ENCODE measurements at regions of chr14 and their contacts with region 1.

Region 1: GRCh38 chr14:100383727-100384158 is 60.6 kb downstream of the SLC25A47 start:
- DNase-seq: peak; percentile 49 to 72 (median 66)
- H3K4me3 ChIP-seq: no peak overlapping the region
- H3K27ac ChIP-seq: no peak overlapping the region
- H3K4me1 ChIP-seq: peaks cover 0 to 3% (median 0%) of the 10 kb centered on the region in 4 experiments
- H3K27me3 ChIP-seq: no peaks in the 10 kb centered on the region

Region 2: DNA sequence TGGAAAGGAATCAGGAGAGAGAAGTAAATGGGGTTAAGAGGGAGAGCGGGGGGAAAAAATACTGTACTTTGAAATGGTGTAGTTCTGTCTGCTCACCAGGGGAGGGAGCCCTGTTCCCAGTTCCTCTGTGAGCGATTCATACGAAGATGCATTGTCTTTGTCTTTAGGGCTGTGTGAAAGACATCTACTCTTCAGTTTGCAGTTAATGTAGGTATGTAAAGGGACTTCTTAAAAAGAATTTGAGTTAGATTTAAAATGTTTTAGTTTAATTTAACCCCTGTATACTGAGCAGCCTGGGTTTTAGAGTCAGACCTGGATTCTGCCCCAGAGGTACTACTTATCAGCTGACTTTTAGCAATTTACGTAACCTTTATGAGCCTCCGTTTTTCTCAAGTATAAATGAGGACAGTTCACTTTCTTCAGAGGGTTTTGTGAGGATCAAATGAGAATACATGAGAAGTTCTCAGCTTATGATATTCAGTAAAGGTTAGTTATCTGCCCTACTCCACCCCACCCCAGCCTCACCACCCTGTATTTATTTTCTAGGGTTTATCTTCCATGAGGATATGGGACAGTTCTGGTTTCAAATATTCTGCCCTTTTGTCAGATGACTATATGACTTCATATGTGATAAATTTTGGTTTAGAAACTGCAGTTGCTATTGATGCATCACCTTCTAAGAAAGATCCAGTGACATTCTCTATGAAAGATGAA is 401.0 kb before region 1 on chr14:
- CTCF ChIA-PET with region 1: no interaction called
- POLR2A ChIA-PET with region 1: no interaction called
- DNase-seq: peak; percentile 64 to 78 (median 71)
- H3K4me3 ChIP-seq: peak overlapping the region in 1 of 7 experiments; percentile 20
- H3K27ac ChIP-seq: no peak overlapping the region
- H3K4me1 ChIP-seq: peaks cover 0 to 21% (median 14%) of the 10 kb centered on the region in 4 experiments
- H3K27me3 ChIP-seq: no peaks in the 10 kb centered on the region

Region 3: DNA sequence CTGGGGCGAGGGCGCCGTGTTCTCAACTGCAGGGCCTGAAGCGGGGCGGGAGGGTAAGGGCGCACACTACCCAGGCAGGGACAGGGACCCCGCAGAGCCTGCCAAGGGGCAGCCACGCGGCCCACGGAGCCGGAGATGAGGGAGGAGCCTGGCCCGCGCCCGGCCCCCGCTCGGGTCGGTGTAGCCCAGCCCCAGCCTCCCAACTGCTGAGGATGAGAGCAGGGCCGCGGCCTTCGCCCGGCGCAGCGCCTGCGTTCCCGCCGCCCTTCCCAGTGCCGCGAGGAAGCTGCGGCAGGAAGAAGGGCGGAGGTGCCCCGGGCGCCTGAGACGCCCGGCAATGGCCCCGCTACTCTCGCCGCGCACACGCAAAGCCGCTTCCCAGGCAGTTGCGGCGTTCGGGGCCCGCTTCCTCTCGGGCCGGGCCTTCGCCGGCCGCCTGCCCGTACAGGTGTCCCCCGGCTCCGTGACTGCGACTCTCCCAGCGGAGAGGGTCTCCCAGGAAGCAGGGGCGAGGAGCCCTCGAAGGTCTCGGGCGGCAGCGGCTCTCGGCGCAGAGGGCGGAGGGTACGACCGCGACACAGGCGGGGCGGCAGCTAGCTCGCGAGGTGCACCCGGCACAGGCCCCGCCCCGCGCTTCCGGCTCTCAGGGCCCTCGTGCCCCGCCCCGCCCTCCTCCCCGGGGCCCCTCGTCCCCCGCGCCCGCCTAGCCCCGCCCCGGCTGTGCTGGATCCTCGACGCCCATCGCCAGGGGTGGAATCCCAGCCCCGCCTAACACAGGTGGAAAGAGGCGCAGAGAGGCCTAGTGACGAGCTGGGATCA is 169.6 kb before region 1 on chr14:
- CTCF ChIA-PET with region 1: no interaction called
- POLR2A ChIA-PET with region 1: no interaction called
- DNase-seq: peak; percentile 86 to 94 (median 93)
- H3K4me3 ChIP-seq: peak overlapping the region; percentile 57 to 87 (median 76)
- H3K27ac ChIP-seq: peak overlapping the region; percentile 78 to 87
- H3K4me1 ChIP-seq: peaks cover 5 to 25% (median 21%) of the 10 kb centered on the region in 4 experiments
- H3K27me3 ChIP-seq: no peaks in the 10 kb centered on the region

Region 4: GRCh38 chr14:100297302-100298300 is 86.1 kb before region 1 on chr14:
- CTCF ChIA-PET with region 1: interaction called, 14 read pairs
- POLR2A ChIA-PET with region 1: no interaction called
- DNase-seq: peak; percentile 62 to 91 (median 87)
- H3K4me3 ChIP-seq: peak overlapping the region in 3 of 7 experiments; percentile 1 to 26 (median 13)
- H3K27ac ChIP-seq: peak overlapping the region in 1 of 2 experiments; percentile 52
- H3K4me1 ChIP-seq: peaks cover 3 to 30% (median 23%) of the 10 kb centered on the region in 4 experiments
- H3K27me3 ChIP-seq: no peaks in the 10 kb centered on the region

Region 5: DNA sequence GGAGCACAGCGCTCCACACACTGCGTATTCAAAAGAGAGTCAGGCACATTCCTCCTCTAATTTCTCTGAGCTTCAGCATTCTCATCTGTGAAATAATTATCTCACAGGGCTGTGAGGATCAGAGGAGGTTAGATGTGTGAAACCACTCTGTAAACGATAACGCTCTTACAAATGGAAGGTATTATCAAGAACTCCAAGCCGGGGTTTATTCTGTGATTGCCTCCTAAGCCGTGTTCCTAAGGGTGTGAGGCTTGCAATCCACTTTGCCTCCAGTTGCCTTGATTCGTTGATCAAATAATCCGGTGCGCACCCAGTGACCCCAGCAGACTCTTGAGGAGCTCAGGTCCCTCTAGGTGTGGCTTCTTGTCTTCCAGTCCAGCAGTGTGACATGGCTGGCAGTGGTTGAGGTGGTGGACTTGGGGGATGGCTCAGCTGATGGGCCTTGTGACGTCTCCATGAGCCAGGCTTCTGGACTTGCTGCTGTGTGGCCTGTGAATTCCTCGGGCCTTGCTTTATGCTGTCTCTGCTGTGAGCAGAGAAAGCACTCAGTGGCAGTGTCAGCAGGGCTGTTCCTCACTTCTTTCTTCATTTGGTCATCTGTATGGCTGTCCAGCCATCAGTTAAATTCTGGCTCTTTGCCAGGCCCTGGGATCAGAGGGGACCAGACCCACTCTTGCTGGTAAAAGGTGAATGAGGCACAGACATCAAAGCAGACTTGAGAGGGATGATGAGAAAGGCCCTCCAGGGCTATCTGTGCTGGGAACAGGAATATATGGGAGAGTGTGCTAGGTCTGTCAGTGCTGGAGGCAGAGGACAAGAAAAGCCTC is 10.4 kb after region 1 on chr14:
- CTCF ChIA-PET with region 1: interaction called, 19 read pairs
- POLR2A ChIA-PET with region 1: no interaction called
- DNase-seq: no peak
- H3K4me3 ChIP-seq: no peak overlapping the region
- H3K27ac ChIP-seq: no peak overlapping the region
- H3K4me1 ChIP-seq: peaks cover 0 to 7% (median 4%) of the 10 kb centered on the region in 4 experiments
- H3K27me3 ChIP-seq: peaks cover 0 to under 1% (median 0%) of the 10 kb centered on the region in 5 experiments

Region 6: DNA sequence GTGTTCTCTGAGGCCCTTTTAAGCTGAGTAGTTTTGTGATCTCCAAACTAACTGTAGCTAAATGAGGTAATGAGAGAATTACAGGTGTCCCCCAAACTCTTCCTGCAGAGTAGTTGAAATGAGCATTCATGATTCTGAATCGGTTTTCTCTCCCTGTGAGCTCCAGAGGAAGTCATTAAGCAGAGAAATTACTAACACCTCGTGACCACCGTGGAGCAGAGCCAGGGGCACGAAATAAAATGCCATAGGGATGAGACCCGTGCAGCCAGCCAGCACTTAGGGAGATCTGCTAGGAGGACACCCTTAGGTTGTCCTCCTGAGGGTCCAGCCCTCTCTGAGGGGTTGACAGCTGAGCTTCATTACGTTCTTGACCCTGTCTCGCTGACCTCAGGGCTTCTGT is 18.9 kb after region 1 on chr14:
- CTCF ChIA-PET with region 1: interaction called, 12 read pairs
- POLR2A ChIA-PET with region 1: no interaction called
- DNase-seq: peak in 2 of 3 donors; percentile 5 to 11
- H3K4me3 ChIP-seq: no peak overlapping the region
- H3K27ac ChIP-seq: no peak overlapping the region
- H3K4me1 ChIP-seq: peaks cover 6 to 23% (median 20%) of the 10 kb centered on the region in 4 experiments
- H3K27me3 ChIP-seq: peaks cover 0 to 3% (median 0%) of the 10 kb centered on the region in 5 experiments

Region 7: GRCh38 chr14:100654814-100655740 is 271.3 kb after region 1 on chr14:
- CTCF ChIA-PET with region 1: interaction called, 119 read pairs
- POLR2A ChIA-PET with region 1: no interaction called
- DNase-seq: peak in 2 of 3 donors; percentile 47 to 51
- H3K4me3 ChIP-seq: peak overlapping the region in 1 of 7 experiments; percentile 19
- H3K27ac ChIP-seq: no peak overlapping the region
- H3K4me1 ChIP-seq: peaks cover 0 to 8% (median 2%) of the 10 kb centered on the region in 4 experiments
- H3K27me3 ChIP-seq: peaks cover 0 to 20% (median 0%) of the 10 kb centered on the region in 5 experiments

Region 8: GRCh38 chr14:100662879-100663760 is 279.4 kb after region 1 on chr14:
- CTCF ChIA-PET with region 1: interaction called, 119 read pairs
- POLR2A ChIA-PET with region 1: no interaction called
- DNase-seq: peak; percentile 66 to 89 (median 88)
- H3K4me3 ChIP-seq: no peak overlapping the region
- H3K27ac ChIP-seq: no peak overlapping the region
- H3K4me1 ChIP-seq: peaks cover 0 to 18% (median 12%) of the 10 kb centered on the region in 4 experiments
- H3K27me3 ChIP-seq: no peaks in the 10 kb centered on the region